Activated CD4-positive, alpha-beta T cell treated with anti-CD3 and anti-CD28 coated beads, Interleukin-2, amount 10 ng/mL, durations not matched to agents 24 days and 14 days (primary cell): ENCODE measurements at regions of chr6 and their contacts with region 1.

Region 1: GRCh38 chr6:33585403-33586107 is 5.5 kb upstream of the BAK1 start:
- DNase-seq: peak; percentile 97
- H3K4me3 Mint-ChIP-seq: peak overlapping the region; percentile 82
- H3K27ac Mint-ChIP-seq: peak overlapping the region; percentile 94
- H3K4me1 Mint-ChIP-seq: peaks cover 25% of the 10 kb centered on the region
- H3K27me3 Mint-ChIP-seq: no peaks in the 10 kb centered on the region

Region 2: GRCh38 chr6:33700391-33701050 is 115.0 kb after region 1 on chr6:
- intact Hi-C with region 1: loop called (anchors 1 kb)
- DNase-seq: peak; percentile 93
- H3K4me3 Mint-ChIP-seq: no peak overlapping the region
- H3K27ac Mint-ChIP-seq: peak overlapping the region; percentile 87
- H3K4me1 Mint-ChIP-seq: peaks cover 38% of the 10 kb centered on the region
- H3K27me3 Mint-ChIP-seq: no peaks in the 10 kb centered on the region

Region 3: GRCh38 chr6:33761922-33762629 is 176.5 kb after region 1 on chr6:
- intact Hi-C with region 1: loop called (anchors 5 kb)
- DNase-seq: peak; percentile 83
- H3K4me3 Mint-ChIP-seq: no peak overlapping the region
- H3K27ac Mint-ChIP-seq: no peak overlapping the region
- H3K4me1 Mint-ChIP-seq: peaks cover 3% of the 10 kb centered on the region
- H3K27me3 Mint-ChIP-seq: peaks cover 5% of the 10 kb centered on the region